GM12878 (cell line): ENCODE measurements at regions of chr2 and their contacts with region 1.

Region 1: DNA sequence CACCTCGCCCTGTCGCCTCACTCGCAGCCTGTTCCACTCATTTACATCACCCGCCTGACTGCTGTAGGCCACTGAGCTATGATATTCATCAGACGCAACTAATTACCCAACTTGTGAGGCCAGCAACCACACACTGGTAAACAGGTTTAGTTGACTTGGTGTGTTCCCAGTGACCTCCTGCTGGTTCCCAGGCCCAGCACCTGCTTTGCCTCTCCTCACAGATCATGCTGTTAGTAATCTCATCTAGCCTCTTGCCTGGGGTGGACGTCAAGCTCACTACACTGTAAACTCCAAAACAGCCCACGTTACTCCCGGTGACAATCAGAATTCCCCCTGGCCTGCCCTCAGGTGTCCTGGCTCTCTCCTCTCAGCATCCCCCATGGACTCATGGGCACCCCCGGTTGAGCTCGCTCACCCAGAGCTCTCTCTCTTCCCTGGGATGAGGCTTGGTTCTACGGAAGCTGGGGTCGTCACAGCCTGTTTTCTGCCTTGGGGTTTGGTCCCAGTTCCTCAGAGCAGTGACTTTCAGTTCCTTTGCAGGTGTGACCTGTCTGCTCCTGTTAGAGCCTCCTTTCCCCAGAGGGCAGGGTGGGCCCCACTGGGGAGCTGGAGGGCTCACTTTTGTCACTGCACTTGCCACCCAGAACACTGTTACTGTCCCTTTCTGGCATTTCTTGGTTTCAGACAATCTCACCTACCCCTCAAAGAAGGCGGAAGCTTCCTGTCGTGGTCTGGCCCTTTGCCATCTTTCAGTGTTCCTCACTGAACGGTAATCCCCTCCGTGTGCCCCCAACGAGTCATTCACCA is 40.3 kb downstream of the INPP5D start:
- DNase-seq: peak; percentile 95
- ATAC-seq: peak; percentile 90
- H3K4me3 ChIP-seq: peak overlapping the region; percentile 35; the same call in 1 of the 2 replicates
- H3K27ac ChIP-seq: peak overlapping the region; percentile 99
- H3K4me1 ChIP-seq: peaks cover 49% of the 10 kb centered on the region
- H3K27me3 ChIP-seq: no peaks in the 10 kb centered on the region
- CTCF ChIP-seq: no peak
- EP300 ChIP-seq: peak; percentile 78 to 92; a peak in 3 of 4 replicates
- POLR2A ChIP-seq: no peak; the same call in 1 of the 2 replicates
- RAD21 ChIP-seq: peak; percentile 3; the same call in 1 of the 2 replicates

Region 2: GRCh38 chr2:232781765-232782164 is 318.6 kb before region 1 on chr2:
- CTCF ChIA-PET with region 1: no interaction called
- POLR2A ChIA-PET with region 1: no interaction called
- RAD21 ChIA-PET with region 1: no interaction called
- SMC1A ChIA-PET with region 1: no interaction called
- in situ Hi-C with region 1: no loop called
- intact Hi-C with region 1: no loop called
- DNase-seq: peak; percentile 55
- ATAC-seq: peak; percentile 100
- H3K4me3 ChIP-seq: no peak overlapping the region
- H3K27ac ChIP-seq: no peak overlapping the region
- H3K4me1 ChIP-seq: no peaks in the 10 kb centered on the region
- H3K27me3 ChIP-seq: no peaks in the 10 kb centered on the region
- CTCF ChIP-seq: no peak
- EP300 ChIP-seq: peak; percentile 54 to 72; a peak in 2 of 4 replicates
- POLR2A ChIP-seq: no peak
- RAD21 ChIP-seq: no peak

Region 3: GRCh38 chr2:233068762-233069418 is 31.5 kb before region 1 on chr2:
- CTCF ChIA-PET with region 1: interaction called, 13 read pairs
- POLR2A ChIA-PET with region 1: interaction called, 70 read pairs
- RAD21 ChIA-PET with region 1: interaction called, 160 read pairs
- SMC1A ChIA-PET with region 1: interaction called, 14 read pairs
- in situ Hi-C with region 1: no loop called
- intact Hi-C with region 1: no loop called
- DNase-seq: no peak
- ATAC-seq: peak; percentile 57
- H3K4me3 ChIP-seq: peak overlapping the region; percentile 58
- H3K27ac ChIP-seq: peak overlapping the region; percentile 14
- H3K4me1 ChIP-seq: peaks cover 62% of the 10 kb centered on the region
- H3K27me3 ChIP-seq: no peaks in the 10 kb centered on the region
- CTCF ChIP-seq: no peak
- EP300 ChIP-seq: no peak
- POLR2A ChIP-seq: no peak; the same call in none of the 2 replicates
- RAD21 ChIP-seq: no peak

Region 4: GRCh38 chr2:233075966-233076339 is 24.4 kb before region 1 on chr2:
- CTCF ChIA-PET with region 1: interaction called, 10 read pairs
- POLR2A ChIA-PET with region 1: interaction called, 59 read pairs
- RAD21 ChIA-PET with region 1: interaction called, 163 read pairs
- SMC1A ChIA-PET with region 1: interaction called, 328 read pairs
- in situ Hi-C with region 1: no loop called
- intact Hi-C with region 1: no loop called
- DNase-seq: peak; percentile 82
- ATAC-seq: peak; percentile 68
- H3K4me3 ChIP-seq: peak overlapping the region; percentile 30; the same call in 1 of the 2 replicates
- H3K27ac ChIP-seq: peak overlapping the region; percentile 89
- H3K4me1 ChIP-seq: peaks cover 87% of the 10 kb centered on the region
- H3K27me3 ChIP-seq: no peaks in the 10 kb centered on the region
- CTCF ChIP-seq: no peak
- EP300 ChIP-seq: 0 out of 4 replicates have a peak, but pooled peaks of 1 of the 2 experiments have one; percentile 33
- POLR2A ChIP-seq: 0 out of 2 replicates have a peak, but pooled peaks have one; percentile 17
- RAD21 ChIP-seq: no peak

Region 5: GRCh38 chr2:233114421-233114861 is 14.0 kb after region 1 on chr2:
- CTCF ChIA-PET with region 1: interaction called, 7 read pairs
- POLR2A ChIA-PET with region 1: interaction called, 10 read pairs
- RAD21 ChIA-PET with region 1: interaction called, 13 read pairs
- SMC1A ChIA-PET with region 1: interaction called, 15 read pairs
- in situ Hi-C with region 1: no loop called
- intact Hi-C with region 1: no loop called
- DNase-seq: no peak
- ATAC-seq: peak; percentile 42
- H3K4me3 ChIP-seq: no peak overlapping the region
- H3K27ac ChIP-seq: peak overlapping the region; percentile 20; the same call in 1 of the 2 replicates
- H3K4me1 ChIP-seq: peaks cover 6% of the 10 kb centered on the region
- H3K27me3 ChIP-seq: no peaks in the 10 kb centered on the region
- CTCF ChIP-seq: no peak
- EP300 ChIP-seq: no peak
- POLR2A ChIP-seq: no peak
- RAD21 ChIP-seq: no peak

Region 6: DNA sequence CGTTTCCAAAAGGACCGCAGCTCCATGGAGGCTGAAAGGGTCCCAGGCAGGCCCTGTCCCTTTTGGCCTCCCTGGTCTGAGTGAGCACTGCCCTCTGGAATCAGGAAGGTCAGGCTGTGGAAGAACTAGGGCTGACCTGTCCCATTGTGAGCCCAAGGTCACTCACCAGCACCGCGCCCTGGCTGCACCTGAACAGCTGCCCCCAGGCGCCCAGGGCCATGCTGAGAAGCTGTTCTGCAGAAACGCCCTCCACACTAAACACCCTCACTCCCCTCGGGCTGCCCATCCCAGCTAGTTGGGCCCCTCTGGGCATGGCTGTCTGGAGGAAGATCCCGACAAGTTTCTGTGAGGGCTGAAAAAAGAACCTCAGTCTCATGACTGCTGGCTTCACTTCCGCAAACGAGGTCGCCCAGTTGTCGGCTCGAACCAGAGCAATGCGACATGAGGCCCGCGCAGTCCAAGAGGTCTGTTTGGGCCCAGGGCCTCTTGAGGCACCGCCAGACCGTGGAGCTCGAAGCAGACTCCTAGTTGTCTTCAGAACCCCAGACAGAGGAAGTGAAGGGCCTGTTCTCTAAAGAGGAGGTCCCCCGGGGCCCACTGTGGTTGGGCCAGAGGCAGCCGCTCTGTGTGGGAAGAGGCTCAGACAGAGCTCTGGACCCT is 24.2 kb after region 1 on chr2:
- CTCF ChIA-PET with region 1: interaction called, 5 read pairs
- POLR2A ChIA-PET with region 1: interaction called, 5 read pairs
- RAD21 ChIA-PET with region 1: interaction called, 16 read pairs
- SMC1A ChIA-PET with region 1: interaction called, 12 read pairs
- in situ Hi-C with region 1: no loop called
- intact Hi-C with region 1: no loop called
- DNase-seq: peak; percentile 46
- ATAC-seq: peak; percentile 94
- H3K4me3 ChIP-seq: peak overlapping the region; percentile 15; the same call in 1 of the 2 replicates
- H3K27ac ChIP-seq: peak overlapping the region; percentile 93
- H3K4me1 ChIP-seq: peaks cover 27% of the 10 kb centered on the region
- H3K27me3 ChIP-seq: no peaks in the 10 kb centered on the region
- CTCF ChIP-seq: no peak
- EP300 ChIP-seq: 0 out of 4 replicates have a peak, but pooled peaks of 1 of the 2 experiments have one; percentile 51
- POLR2A ChIP-seq: peak; percentile 60; the same call in 1 of the 2 replicates
- RAD21 ChIP-seq: no peak

Region 7: GRCh38 chr2:233142355-233142897 is 42.0 kb after region 1 on chr2:
- CTCF ChIA-PET with region 1: interaction called, 3 read pairs
- POLR2A ChIA-PET with region 1: interaction called, 3 read pairs
- RAD21 ChIA-PET with region 1: interaction called, 8 read pairs
- SMC1A ChIA-PET with region 1: interaction called, 12 read pairs
- in situ Hi-C with region 1: no loop called
- intact Hi-C with region 1: loop called (anchors 1 kb)
- DNase-seq: peak; percentile 74
- ATAC-seq: peak; percentile 93
- H3K4me3 ChIP-seq: no peak overlapping the region; the same call in 1 of the 2 replicates
- H3K27ac ChIP-seq: peak overlapping the region; percentile 74
- H3K4me1 ChIP-seq: peaks cover 19% of the 10 kb centered on the region
- H3K27me3 ChIP-seq: no peaks in the 10 kb centered on the region
- CTCF ChIP-seq: no peak
- EP300 ChIP-seq: peak; percentile 34 to 55; a peak in 2 of 4 replicates
- POLR2A ChIP-seq: peak; percentile 60; the same call in 1 of the 2 replicates
- RAD21 ChIP-seq: 0 out of 2 replicates have a peak, but pooled peaks have one; percentile 24

Region 8: GRCh38 chr2:233202531-233202944 is 102.1 kb after region 1 on chr2:
- CTCF ChIA-PET with region 1: interaction called, 4 read pairs
- POLR2A ChIA-PET with region 1: no interaction called
- RAD21 ChIA-PET with region 1: interaction called, 4 read pairs
- SMC1A ChIA-PET with region 1: no interaction called
- in situ Hi-C with region 1: no loop called
- intact Hi-C with region 1: loop called (anchors 5 kb)
- DNase-seq: peak; percentile 64
- ATAC-seq: peak; percentile 45
- H3K4me3 ChIP-seq: no peak overlapping the region
- H3K27ac ChIP-seq: peak overlapping the region; percentile 78
- H3K4me1 ChIP-seq: peaks cover 28% of the 10 kb centered on the region
- H3K27me3 ChIP-seq: no peaks in the 10 kb centered on the region
- CTCF ChIP-seq: no peak
- EP300 ChIP-seq: no peak
- POLR2A ChIP-seq: no peak; the same call in 1 of the 2 replicates
- RAD21 ChIP-seq: no peak